ENCODE measurements at regions of chr3 and their contacts with region 1.

Region 1: GRCh38 chr3:42159706-42160472 is 68.7 kb downstream of the TRAK1 start:
- DNase-seq: peak; percentile 79
- H3K4me3 ChIP-seq: peak overlapping the region; percentile 44 to 59 (median 52)
- H3K27ac ChIP-seq: peak overlapping the region; percentile 76
- H3K4me1 ChIP-seq: peaks cover 32% of the 10 kb centered on the region
- H3K27me3 ChIP-seq: no peaks in the 10 kb centered on the region
- CTCF ChIP-seq: no peak

Region 2: DNA sequence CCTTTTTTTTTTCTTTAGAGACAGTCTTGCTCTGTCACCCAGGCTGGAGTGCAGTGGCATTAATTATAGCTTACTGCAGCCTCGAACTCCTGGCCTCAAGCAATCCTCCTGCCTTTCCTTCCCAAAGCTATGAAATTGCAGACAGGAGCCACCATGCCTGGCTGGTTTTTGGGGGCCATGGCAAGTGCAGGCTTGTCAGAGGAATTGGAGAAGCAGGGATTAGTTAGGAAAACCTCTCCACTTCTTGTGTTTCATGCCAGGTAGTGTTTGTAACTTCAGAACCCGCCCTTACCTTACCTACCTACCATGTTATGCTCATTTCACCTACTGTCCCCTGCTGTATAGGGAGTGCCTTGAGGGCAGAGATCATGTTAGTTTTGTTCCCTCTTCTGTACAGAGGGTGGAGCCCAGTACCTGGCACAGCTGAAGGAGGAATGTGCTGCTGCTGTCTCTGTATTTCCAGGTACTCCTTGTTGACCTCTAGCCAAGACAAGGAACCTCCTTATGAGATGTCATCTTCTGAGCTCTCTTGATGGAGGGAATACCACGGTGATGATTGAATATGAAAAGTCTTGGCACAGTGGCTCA is 24.9 kb before region 1 on chr3:
- CTCF ChIA-PET with region 1: no interaction called
- dilution Hi-C with region 1: no loop called
- in situ Hi-C with region 1: no loop called
- intact Hi-C with region 1: loop called (anchors 2 kb)
- DNase-seq: peak; percentile 26
- H3K4me3 ChIP-seq: no peak overlapping the region
- H3K27ac ChIP-seq: no peak overlapping the region
- H3K4me1 ChIP-seq: peaks cover 17% of the 10 kb centered on the region
- H3K27me3 ChIP-seq: no peaks in the 10 kb centered on the region
- CTCF ChIP-seq: peak in 1 of 2 donors; percentile 22

Region 3: DNA sequence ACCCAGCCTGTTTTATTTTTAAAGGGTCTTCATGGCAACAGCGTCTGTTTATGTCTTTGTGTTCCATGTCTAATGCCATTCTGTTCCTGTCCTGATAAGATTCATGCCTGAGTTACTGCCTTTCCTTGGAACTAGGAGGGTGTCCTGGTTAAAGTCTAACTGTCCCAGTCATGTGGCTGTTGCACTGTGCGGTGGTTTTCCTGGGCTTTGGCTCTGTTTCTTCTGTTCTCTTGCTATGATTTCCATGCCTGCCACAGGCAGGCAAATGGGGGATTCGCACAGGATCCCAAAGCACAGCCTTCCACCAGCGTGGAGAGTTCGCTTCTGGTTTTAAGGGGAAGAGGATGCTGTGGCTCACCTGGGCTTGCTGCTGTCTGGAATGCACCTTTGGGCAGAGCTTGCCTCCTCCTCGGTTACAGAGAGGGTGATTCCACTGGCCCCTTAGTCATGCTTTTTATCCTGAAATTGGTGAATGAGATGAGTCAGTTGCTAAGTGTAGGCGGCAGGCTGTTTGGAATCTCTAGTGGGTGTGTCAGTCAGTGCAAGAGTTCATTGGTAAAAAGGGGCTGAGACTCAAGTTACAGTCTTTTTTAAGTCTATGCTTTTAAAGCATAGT is 19.3 kb after region 1 on chr3:
- CTCF ChIA-PET with region 1: no interaction called
- dilution Hi-C with region 1: no loop called
- in situ Hi-C with region 1: no loop called
- intact Hi-C with region 1: loop called (anchors 2 kb)
- DNase-seq: peak; percentile 97
- H3K4me3 ChIP-seq: no peak overlapping the region
- H3K27ac ChIP-seq: peak overlapping the region; percentile 89
- H3K4me1 ChIP-seq: peaks cover 52% of the 10 kb centered on the region
- H3K27me3 ChIP-seq: no peaks in the 10 kb centered on the region
- CTCF ChIP-seq: no peak